CD14-positive monocyte (primary cell): ENCODE measurements at regions of chr7 and their contacts with region 1.

Region 1: DNA sequence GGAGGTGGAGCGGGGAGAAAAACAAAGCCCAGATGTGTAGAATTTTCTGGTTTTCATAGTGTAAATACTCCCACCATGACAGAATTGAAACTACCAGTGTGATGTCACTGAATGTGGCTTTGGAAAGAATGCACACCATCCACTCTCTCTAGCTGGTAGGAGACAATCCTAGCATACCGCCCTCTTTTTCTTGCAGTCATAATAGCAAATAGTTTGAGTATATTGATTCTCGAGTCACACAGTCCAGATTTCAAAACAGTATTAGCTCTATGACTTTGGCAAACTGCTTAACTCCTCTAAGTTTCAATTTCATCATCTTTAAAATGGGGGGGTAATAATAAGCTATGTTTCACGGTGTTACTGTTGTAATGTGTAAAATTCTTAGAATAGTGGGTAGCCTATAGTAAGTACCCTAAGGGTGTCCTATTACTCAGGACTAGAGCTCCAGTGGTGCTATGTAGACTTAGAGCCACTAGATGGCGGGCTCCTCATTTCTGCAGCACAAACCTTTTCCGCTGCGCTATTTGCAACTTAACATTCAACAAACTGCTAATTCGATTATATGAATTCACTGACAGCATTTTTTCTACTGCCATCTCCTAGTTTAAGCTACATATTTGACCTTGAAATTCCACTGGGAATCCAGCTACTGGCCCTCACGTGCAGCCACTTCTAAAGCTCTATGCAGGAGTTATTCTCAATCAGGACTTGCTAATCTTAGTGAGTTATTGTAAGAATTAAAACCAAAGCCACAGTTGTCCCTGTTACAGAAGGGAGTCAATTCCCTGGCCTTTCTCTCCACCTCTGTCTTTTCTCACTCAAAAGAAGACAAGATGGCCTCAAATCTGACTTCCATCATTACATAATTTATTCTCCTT is 18.7 kb downstream of the TAS2R40 start:
- DNase-seq: peak; percentile 61 to 81 (median 79)
- H3K4me3 ChIP-seq: peak overlapping the region; percentile 12 to 70 (median 37)
- H3K4me3 Mint-ChIP-seq: peak overlapping the region; percentile 48 to 76
- H3K27ac ChIP-seq: peak overlapping the region; percentile 59 to 90
- H3K27ac Mint-ChIP-seq: peak overlapping the region; percentile 92 to 97 (median 95)
- H3K4me1 ChIP-seq: peaks cover 74 to 90% of the 10 kb centered on the region in 2 donors
- H3K4me1 Mint-ChIP-seq: peaks cover 86% of the 10 kb centered on the region
- H3K27me3 ChIP-seq: no peaks in the 10 kb centered on the region
- H3K27me3 Mint-ChIP-seq: peaks cover 0 to 3% (median 0%) of the 10 kb centered on the region in 3 donors
- CTCF ChIP-seq: peak; percentile 97

Region 2: GRCh38 chr7:143205560-143206293 is 34.8 kb before region 1 on chr7:
- intact Hi-C with region 1: no loop called
- DNase-seq: peak; percentile 83 to 89 (median 84)
- H3K4me3 ChIP-seq: peak overlapping the region; percentile 35 to 66 (median 47)
- H3K4me3 Mint-ChIP-seq: peak overlapping the region; percentile 67 to 85
- H3K27ac ChIP-seq: peak overlapping the region; percentile 7 to 74
- H3K27ac Mint-ChIP-seq: peak overlapping the region; percentile 58 to 94 (median 90)
- H3K4me1 ChIP-seq: peaks cover 25 to 33% of the 10 kb centered on the region in 2 donors
- H3K4me1 Mint-ChIP-seq: peaks cover 44% of the 10 kb centered on the region
- H3K27me3 ChIP-seq: no peaks in the 10 kb centered on the region
- H3K27me3 Mint-ChIP-seq: peaks cover 0 to 3% (median 3%) of the 10 kb centered on the region in 3 donors
- CTCF ChIP-seq: no peak

Region 3: GRCh38 chr7:143287935-143288826 is 47.7 kb after region 1 on chr7 and contains the start of gene CASP2:
- intact Hi-C with region 1: loop called in 1 of 2 experiments (anchors 5 kb)
- DNase-seq: peak; percentile 96 to 97 (median 97)
- H3K4me3 ChIP-seq: peak within 1 kb of the TSS; percentile 82 to 88 (median 86)
- H3K4me3 Mint-ChIP-seq: peak within 1 kb of the TSS; percentile 89 to 95
- H3K27ac ChIP-seq: peak within 1 kb of the TSS; percentile 26 to 74
- H3K27ac Mint-ChIP-seq: peak within 1 kb of the TSS; percentile 80 to 90 (median 88)
- H3K4me1 ChIP-seq: peaks cover 31% of the 10 kb centered on the region in 2 donors
- H3K4me1 Mint-ChIP-seq: peaks cover 38% of the 10 kb centered on the region
- H3K27me3 ChIP-seq: no peaks in the 10 kb centered on the region
- H3K27me3 Mint-ChIP-seq: peaks cover 0 to 3% (median 2%) of the 10 kb centered on the region in 3 donors
- CTCF ChIP-seq: no peak
- polyA plus RNA-seq, gene CASP2: 7.9 to 30.2 (median 12.2) TPM

Region 4: GRCh38 chr7:143299840-143300239 is 59.3 kb after region 1 on chr7:
- intact Hi-C with region 1: loop called in 1 of 2 experiments (anchors 5 kb)
- DNase-seq: no peak
- H3K4me3 ChIP-seq: peak overlapping the region in 1 of 3 experiments; percentile 40
- H3K4me3 Mint-ChIP-seq: no peak overlapping the region
- H3K27ac ChIP-seq: peak overlapping the region; percentile 31 to 79
- H3K27ac Mint-ChIP-seq: peak overlapping the region; percentile 76 to 88 (median 84)
- H3K4me1 ChIP-seq: peaks cover 45 to 60% of the 10 kb centered on the region in 2 donors
- H3K4me1 Mint-ChIP-seq: peaks cover 58% of the 10 kb centered on the region
- H3K27me3 ChIP-seq: no peaks in the 10 kb centered on the region
- H3K27me3 Mint-ChIP-seq: no peaks in the 10 kb centered on the region
- CTCF ChIP-seq: peak; percentile 47

Region 5: GRCh38 chr7:143380255-143380645 is 139.7 kb after region 1 on chr7:
- intact Hi-C with region 1: loop called in 1 of 2 experiments (anchors 5 kb)
- DNase-seq: peak; percentile 93 to 95 (median 93)
- H3K4me3 ChIP-seq: peak overlapping the region; percentile 81 to 99 (median 98)
- H3K4me3 Mint-ChIP-seq: peak overlapping the region; percentile 92 to 97
- H3K27ac ChIP-seq: peak overlapping the region; percentile 99
- H3K27ac Mint-ChIP-seq: peak overlapping the region in 6 of 7 donors; percentile 97 to 100 (median 98)
- H3K4me1 ChIP-seq: peaks cover 69 to 80% of the 10 kb centered on the region in 2 donors
- H3K4me1 Mint-ChIP-seq: peaks cover 47% of the 10 kb centered on the region
- H3K27me3 ChIP-seq: no peaks in the 10 kb centered on the region
- H3K27me3 Mint-ChIP-seq: peaks cover 0 to 2% (median 0%) of the 10 kb centered on the region in 3 donors
- CTCF ChIP-seq: peak; percentile 88

Region 6: GRCh38 chr7:143416565-143417149 is 176.1 kb after region 1 on chr7:
- intact Hi-C with region 1: loop called in 1 of 2 experiments (anchors 10 kb)
- DNase-seq: peak; percentile 43 to 69 (median 52)
- H3K4me3 ChIP-seq: no peak overlapping the region
- H3K4me3 Mint-ChIP-seq: no peak overlapping the region
- H3K27ac ChIP-seq: no peak overlapping the region
- H3K27ac Mint-ChIP-seq: no peak overlapping the region
- H3K4me1 ChIP-seq: peaks cover 25 to 56% of the 10 kb centered on the region in 2 donors
- H3K4me1 Mint-ChIP-seq: peaks cover 51% of the 10 kb centered on the region
- H3K27me3 ChIP-seq: no peaks in the 10 kb centered on the region
- H3K27me3 Mint-ChIP-seq: no peaks in the 10 kb centered on the region
- CTCF ChIP-seq: peak; percentile 88